MCF 10A (cell line): ENCODE measurements at regions of chr10 and their contacts with region 1.

Region 1: GRCh38 chr10:94439275-94439861 is 37.0 kb downstream of the TBC1D12 start:
- DNase-seq: peak; percentile 28
- H3K4me3 Mint-ChIP-seq: no peak overlapping the region
- H3K27ac Mint-ChIP-seq: no peak overlapping the region
- H3K4me1 Mint-ChIP-seq: no peaks in the 10 kb centered on the region
- H3K27me3 Mint-ChIP-seq: no peaks in the 10 kb centered on the region
- CTCF ChIP-seq: no peak

Region 2: DNA sequence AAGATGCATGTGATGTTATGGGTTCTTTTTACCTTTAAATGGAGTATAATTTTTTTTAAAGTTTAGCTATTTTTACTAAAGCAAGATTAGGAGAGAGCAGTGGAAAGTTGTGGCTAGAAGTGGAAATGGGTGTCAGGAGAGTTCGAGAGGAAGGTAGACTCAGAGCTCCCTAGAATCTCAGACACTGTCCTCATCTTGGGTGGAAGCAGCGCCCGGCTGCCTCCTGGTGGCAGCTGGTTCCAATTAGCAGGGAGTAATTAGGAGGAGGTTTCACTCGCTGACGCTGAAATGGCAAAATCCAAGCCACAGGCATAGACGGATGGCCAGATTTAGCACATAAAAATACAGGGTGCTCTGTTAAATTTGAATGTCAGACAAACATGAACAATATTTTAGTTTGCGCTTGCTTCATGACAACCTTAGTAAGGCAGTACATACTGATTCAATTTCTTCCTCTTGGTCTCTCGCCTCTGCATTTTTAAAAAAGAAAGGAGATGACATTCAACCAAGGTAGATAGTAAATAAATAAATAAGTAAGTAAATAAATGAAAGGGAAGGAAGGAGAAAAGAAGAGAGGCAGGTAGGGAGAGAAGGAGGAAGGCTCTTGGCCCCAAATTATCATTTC is 623.1 kb before region 1 on chr10:
- CTCF ChIA-PET with region 1: no interaction called
- POLR2A ChIA-PET with region 1: no interaction called
- intact Hi-C with region 1: loop called (anchors 10 kb)
- DNase-seq: peak; percentile 73
- H3K4me3 Mint-ChIP-seq: peak overlapping the region; percentile 5
- H3K27ac Mint-ChIP-seq: no peak overlapping the region
- H3K4me1 Mint-ChIP-seq: peaks cover 19% of the 10 kb centered on the region
- H3K27me3 Mint-ChIP-seq: peaks cover 23% of the 10 kb centered on the region
- CTCF ChIP-seq: peak; percentile 69

Region 3: DNA sequence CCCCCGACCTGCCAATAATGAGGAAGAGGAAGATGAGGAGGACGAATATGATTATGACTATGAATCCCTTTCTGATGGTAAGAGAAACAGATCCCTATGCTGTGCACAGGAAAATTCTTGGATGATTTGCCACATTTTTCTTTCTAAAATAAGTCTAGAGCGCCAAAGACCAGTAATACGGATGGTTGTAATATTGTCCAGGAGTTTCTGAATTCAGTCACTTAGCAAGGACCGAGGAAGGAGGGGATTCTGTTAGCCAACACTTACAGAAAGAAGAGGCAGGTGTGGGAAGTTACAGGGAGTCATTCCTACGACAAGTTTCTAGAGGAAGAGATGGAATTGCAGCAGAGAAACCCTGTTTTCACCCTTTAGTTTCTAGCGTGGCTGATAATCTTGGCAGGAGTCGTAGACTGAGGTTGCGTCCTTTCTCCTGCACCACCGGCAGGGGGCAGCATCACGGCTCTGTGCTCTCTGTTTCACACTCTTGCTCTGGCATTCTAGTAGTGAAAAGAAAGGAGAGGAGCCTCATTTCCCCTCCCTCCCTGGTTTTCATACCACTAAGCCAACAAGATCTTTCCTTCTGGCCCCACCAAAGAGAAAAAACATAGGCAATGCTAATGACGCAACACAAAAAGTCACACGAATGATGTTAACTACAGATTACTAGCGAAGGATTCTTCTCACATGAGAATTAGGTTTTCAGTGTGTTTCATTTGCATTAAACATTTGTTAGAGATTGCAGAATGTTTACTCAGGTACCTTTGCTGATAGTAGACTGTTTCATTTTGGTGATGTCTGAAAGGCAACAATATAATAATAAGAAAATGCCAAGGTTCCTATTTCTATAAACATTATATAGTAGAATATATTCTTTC is 159.3 kb before region 1 on chr10:
- CTCF ChIA-PET with region 1: no interaction called
- POLR2A ChIA-PET with region 1: no interaction called
- intact Hi-C with region 1: loop called (anchors 1 kb)
- DNase-seq: peak; percentile 59
- H3K4me3 Mint-ChIP-seq: no peak overlapping the region
- H3K27ac Mint-ChIP-seq: peak overlapping the region; percentile 43
- H3K4me1 Mint-ChIP-seq: peaks cover 5% of the 10 kb centered on the region
- H3K27me3 Mint-ChIP-seq: no peaks in the 10 kb centered on the region
- CTCF ChIP-seq: peak; percentile 73

Region 4: GRCh38 chr10:94344522-94345122 is 94.7 kb before region 1 on chr10:
- CTCF ChIA-PET with region 1: interaction called, 25 read pairs
- POLR2A ChIA-PET with region 1: interaction called, 4 read pairs
- intact Hi-C with region 1: no loop called
- DNase-seq: no peak
- H3K4me3 Mint-ChIP-seq: no peak overlapping the region
- H3K27ac Mint-ChIP-seq: no peak overlapping the region
- H3K4me1 Mint-ChIP-seq: no peaks in the 10 kb centered on the region
- H3K27me3 Mint-ChIP-seq: no peaks in the 10 kb centered on the region
- CTCF ChIP-seq: no peak

Region 5: DNA sequence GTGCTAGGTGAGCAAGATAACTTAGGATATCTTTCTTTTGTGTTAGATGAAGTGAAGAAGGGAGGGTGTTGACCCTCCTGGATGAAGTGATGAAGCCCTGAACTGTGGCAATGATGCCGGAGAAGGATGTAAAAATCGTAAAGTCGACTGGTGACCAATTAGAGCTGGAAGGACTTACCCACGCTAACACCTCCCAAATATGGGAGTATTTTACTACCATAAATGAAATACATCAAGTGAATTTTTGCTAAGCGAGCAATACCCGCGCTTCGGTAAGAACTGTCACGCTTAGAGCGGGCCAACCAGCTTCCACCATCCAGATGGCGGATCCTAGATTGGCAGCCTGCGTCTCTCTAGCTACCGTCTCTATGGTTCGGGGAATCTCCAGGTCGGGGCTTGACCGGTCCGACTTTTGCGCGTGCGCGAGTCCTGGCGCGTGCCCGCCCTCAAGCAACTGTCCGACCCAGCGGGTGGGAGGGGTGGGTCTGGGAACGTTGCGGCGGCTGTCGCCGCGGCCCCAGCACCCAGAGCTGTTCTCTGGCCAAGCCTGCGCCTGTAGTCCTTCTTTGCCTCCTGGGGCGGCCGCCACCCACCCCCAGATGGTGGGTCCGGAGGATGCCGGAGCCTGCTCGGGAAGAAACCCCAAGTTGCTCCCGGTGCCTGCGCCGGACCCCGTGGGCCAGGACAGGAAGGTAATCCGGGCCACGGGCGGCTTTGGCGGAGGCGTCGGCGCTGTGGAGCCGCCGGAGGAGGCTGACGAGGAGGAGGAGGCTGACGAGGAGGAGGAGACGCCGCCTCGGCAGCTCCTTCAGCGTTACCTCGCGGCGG is 37.1 kb before region 1 on chr10 and contains the start of gene TBC1D12:
- CTCF ChIA-PET with region 1: interaction called, 17 read pairs
- POLR2A ChIA-PET with region 1: interaction called, 18 read pairs
- intact Hi-C with region 1: loop called (anchors 5 kb)
- DNase-seq: peak; percentile 95
- H3K4me3 Mint-ChIP-seq: peak within 1 kb of the TSS; percentile 88
- H3K27ac Mint-ChIP-seq: peak within 1 kb of the TSS; percentile 73
- H3K4me1 Mint-ChIP-seq: peaks cover 6% of the 10 kb centered on the region
- H3K27me3 Mint-ChIP-seq: no peaks in the 10 kb centered on the region
- CTCF ChIP-seq: no peak
- total RNA-seq, gene TBC1D12: 5.4 and 5.9 TPM in 2 replicates

Region 6: DNA sequence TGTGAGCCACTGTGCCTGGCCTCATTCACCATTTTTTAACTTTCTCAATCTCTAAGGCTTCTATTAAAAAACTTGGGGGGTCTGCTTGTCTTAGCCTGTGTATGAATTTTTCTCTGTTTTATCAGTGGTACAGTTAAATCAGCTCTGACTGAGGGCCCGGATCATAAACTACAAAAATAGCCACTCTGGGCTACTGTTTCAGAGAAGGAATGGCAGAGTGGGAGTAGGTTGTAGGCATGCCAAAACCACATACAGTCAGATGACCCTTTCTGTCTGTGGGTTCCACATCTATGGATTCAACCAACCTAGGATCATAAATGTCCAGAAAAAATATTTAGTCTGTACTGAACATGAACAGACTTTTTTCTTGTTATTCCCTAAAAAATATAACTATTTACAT is 15.7 kb before region 1 on chr10:
- CTCF ChIA-PET with region 1: interaction called, 13 read pairs
- POLR2A ChIA-PET with region 1: interaction called, 3 read pairs
- intact Hi-C with region 1: no loop called
- DNase-seq: no peak
- H3K4me3 Mint-ChIP-seq: no peak overlapping the region
- H3K27ac Mint-ChIP-seq: no peak overlapping the region
- H3K4me1 Mint-ChIP-seq: no peaks in the 10 kb centered on the region
- H3K27me3 Mint-ChIP-seq: no peaks in the 10 kb centered on the region
- CTCF ChIP-seq: no peak

Region 7: GRCh38 chr10:94607111-94607510 is 167.7 kb after region 1 on chr10:
- CTCF ChIA-PET with region 1: no interaction called
- POLR2A ChIA-PET with region 1: no interaction called
- intact Hi-C with region 1: no loop called
- DNase-seq: no peak
- H3K4me3 Mint-ChIP-seq: no peak overlapping the region
- H3K27ac Mint-ChIP-seq: peak overlapping the region; percentile 16
- H3K4me1 Mint-ChIP-seq: no peaks in the 10 kb centered on the region
- H3K27me3 Mint-ChIP-seq: no peaks in the 10 kb centered on the region
- CTCF ChIP-seq: no peak